ENCODE measurements at regions of chr17 and their contacts with region 1.

Region 1: GRCh38 chr17:16363749-16364536 is 10.7 kb upstream of the CENPV start:
- DNase-seq: peak; percentile 81
- ATAC-seq: peak; percentile 99
- H3K4me3 ChIP-seq: no peak overlapping the region
- H3K4me3 Mint-ChIP-seq: no peak overlapping the region
- H3K27ac ChIP-seq: no peak overlapping the region
- H3K27ac Mint-ChIP-seq: no peak overlapping the region
- H3K4me1 ChIP-seq: peaks cover 0 to 4% of the 10 kb centered on the region in 2 donors
- H3K4me1 Mint-ChIP-seq: no peaks in the 10 kb centered on the region
- H3K27me3 ChIP-seq: no peaks in the 10 kb centered on the region
- H3K27me3 Mint-ChIP-seq: no peaks in the 10 kb centered on the region
- CTCF ChIP-seq: peak; percentile 97

Region 2: DNA sequence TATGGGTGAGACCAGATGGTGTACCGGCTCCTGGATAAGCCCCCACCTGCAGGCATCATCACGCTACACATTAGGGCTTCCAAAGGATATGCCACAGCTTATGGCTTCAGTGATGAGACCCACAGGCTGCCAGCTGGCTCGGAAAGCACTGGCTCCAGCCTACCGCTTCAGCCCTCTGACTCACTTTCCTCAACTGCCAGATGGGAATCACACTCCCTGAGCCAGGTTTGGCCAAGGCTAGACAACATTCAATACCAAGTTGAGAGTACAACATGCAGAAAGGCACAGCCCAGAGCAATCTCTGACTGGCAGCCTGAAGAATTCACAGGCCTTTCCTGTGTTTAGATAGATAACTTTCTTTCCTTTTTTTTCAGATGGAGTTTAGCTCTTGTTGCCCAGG is 21.0 kb before region 1 on chr17:
- CTCF ChIA-PET with region 1: interaction called, 11 read pairs
- POLR2A ChIA-PET with region 1: no interaction called
- intact Hi-C with region 1: no loop called
- DNase-seq: no peak
- ATAC-seq: no peak
- H3K4me3 ChIP-seq: no peak overlapping the region
- H3K4me3 Mint-ChIP-seq: no peak overlapping the region
- H3K27ac ChIP-seq: no peak overlapping the region
- H3K27ac Mint-ChIP-seq: no peak overlapping the region
- H3K4me1 ChIP-seq: no peaks in the 10 kb centered on the region
- H3K4me1 Mint-ChIP-seq: no peaks in the 10 kb centered on the region
- H3K27me3 ChIP-seq: no peaks in the 10 kb centered on the region
- H3K27me3 Mint-ChIP-seq: no peaks in the 10 kb centered on the region
- CTCF ChIP-seq: no peak

Region 3: DNA sequence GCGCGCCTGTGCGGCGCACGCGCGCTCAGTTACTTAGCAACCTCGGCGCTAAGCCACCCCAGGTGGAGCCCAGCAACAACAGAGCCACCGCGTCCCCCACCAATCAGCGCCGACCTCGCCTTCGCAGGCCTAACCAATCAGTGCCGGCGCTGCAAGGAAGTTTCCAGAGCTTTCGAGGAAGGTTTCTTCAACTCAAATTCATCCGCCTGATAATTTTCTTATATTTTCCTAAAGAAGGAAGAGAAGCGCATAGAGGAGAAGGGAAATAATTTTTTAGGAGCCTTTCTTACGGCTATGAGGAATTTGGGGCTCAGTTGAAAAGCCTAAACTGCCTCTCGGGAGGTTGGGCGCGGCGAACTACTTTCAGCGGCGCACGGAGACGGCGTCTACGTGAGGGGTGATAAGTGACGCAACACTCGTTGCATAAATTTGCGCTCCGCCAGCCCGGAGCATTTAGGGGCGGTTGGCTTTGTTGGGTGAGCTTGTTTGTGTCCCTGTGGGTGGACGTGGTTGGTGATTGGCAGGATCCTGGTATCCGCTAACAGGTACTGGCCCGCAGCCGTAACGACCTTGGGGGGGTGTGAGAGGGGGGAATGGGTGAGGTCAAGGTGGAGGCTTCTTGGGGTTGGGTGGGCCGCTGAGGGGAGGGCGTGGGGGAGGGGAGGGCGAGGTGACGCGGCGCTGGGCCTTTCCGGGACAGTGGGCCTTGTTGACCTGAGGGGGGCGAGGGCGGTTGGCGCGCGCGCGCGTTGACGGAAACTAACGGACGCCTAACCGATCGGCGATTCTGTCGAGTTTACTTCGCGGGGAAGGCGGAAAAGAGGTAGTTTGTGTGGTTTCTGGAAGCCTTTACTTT is 16.9 kb after region 1 on chr17 and contains the start of gene UBB:
- CTCF ChIA-PET with region 1: interaction called, 31 read pairs
- POLR2A ChIA-PET with region 1: interaction called, 8 read pairs
- intact Hi-C with region 1: no loop called
- DNase-seq: peak; percentile 97
- ATAC-seq: peak; percentile 89
- H3K4me3 ChIP-seq: peak within 1 kb of the TSS; percentile 73 to 96 (median 91)
- H3K4me3 Mint-ChIP-seq: peak within 1 kb of the TSS; percentile 84
- H3K27ac ChIP-seq: peak within 1 kb of the TSS; percentile 97 to 98
- H3K27ac Mint-ChIP-seq: peak within 1 kb of the TSS; percentile 97
- H3K4me1 ChIP-seq: peaks cover 32 to 43% of the 10 kb centered on the region in 2 donors
- H3K4me1 Mint-ChIP-seq: peaks cover 45% of the 10 kb centered on the region
- H3K27me3 ChIP-seq: no peaks in the 10 kb centered on the region
- H3K27me3 Mint-ChIP-seq: no peaks in the 10 kb centered on the region
- CTCF ChIP-seq: no peak
- total RNA-seq, gene UBB: 765 and 769 TPM in 2 replicates

Region 4: DNA sequence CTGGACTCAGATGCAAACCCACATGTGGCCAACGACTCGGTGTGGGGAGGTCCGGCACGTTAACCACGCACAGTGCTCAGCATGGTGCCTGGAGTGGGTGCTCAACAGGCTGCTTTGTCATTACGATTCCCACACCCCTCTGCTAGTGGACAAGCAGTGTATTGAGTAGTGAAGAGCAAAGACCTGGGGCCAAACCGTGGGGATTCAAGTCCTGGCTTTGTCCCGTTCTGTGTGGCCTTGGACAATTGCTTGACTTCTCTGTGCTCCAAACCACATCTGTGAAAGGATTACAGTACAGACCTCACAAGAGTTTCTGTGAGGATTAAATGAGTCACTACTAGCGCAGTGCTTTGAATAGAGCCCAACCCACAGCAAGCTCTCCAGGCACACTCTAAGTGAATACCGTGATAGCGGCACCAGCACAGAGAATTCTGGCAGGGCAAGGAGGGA is 85.2 kb after region 1 on chr17:
- CTCF ChIA-PET with region 1: interaction called, 23 read pairs
- POLR2A ChIA-PET with region 1: no interaction called
- intact Hi-C with region 1: no loop called
- DNase-seq: no peak
- ATAC-seq: no peak
- H3K4me3 ChIP-seq: no peak overlapping the region
- H3K4me3 Mint-ChIP-seq: no peak overlapping the region
- H3K27ac ChIP-seq: no peak overlapping the region
- H3K27ac Mint-ChIP-seq: no peak overlapping the region
- H3K4me1 ChIP-seq: no peaks in the 10 kb centered on the region
- H3K4me1 Mint-ChIP-seq: peaks cover 3% of the 10 kb centered on the region
- H3K27me3 ChIP-seq: no peaks in the 10 kb centered on the region
- H3K27me3 Mint-ChIP-seq: no peaks in the 10 kb centered on the region
- CTCF ChIP-seq: no peak

Region 5: GRCh38 chr17:16589097-16589969 is 225.4 kb after region 1 on chr17:
- CTCF ChIA-PET with region 1: interaction called, 5 read pairs
- POLR2A ChIA-PET with region 1: no interaction called
- intact Hi-C with region 1: loop called (anchors 2 kb)
- DNase-seq: peak; percentile 92
- ATAC-seq: peak; percentile 98
- H3K4me3 ChIP-seq: peak overlapping the region; percentile 38 to 66 (median 56)
- H3K4me3 Mint-ChIP-seq: peak overlapping the region; percentile 82
- H3K27ac ChIP-seq: no peak overlapping the region
- H3K27ac Mint-ChIP-seq: no peak overlapping the region
- H3K4me1 ChIP-seq: peaks cover 12 to 15% of the 10 kb centered on the region in 2 donors
- H3K4me1 Mint-ChIP-seq: peaks cover 8% of the 10 kb centered on the region
- H3K27me3 ChIP-seq: peaks cover 0 to 30% (median 14%) of the 10 kb centered on the region in 4 experiments
- H3K27me3 Mint-ChIP-seq: peaks cover 51% of the 10 kb centered on the region
- CTCF ChIP-seq: peak; percentile 97

Measured in B cell (primary cell).